Psoas muscle (tissue), 8 donors: ENCODE measurements at regions of chr17 and their contacts with region 1.

Region 1: GRCh38 chr17:63621766-63622519 is at the start of gene MAP3K3:
- DNase-seq: peak; percentile 98 to 99
- ATAC-seq: peak; percentile 95 to 96 (median 96)
- H3K4me3 ChIP-seq: peak within 1 kb of the TSS; percentile 87
- H3K27ac ChIP-seq: peak within 1 kb of the TSS; percentile 90
- H3K4me1 ChIP-seq: peaks cover 36% of the 10 kb centered on the region
- H3K27me3 ChIP-seq: no peaks in the 10 kb centered on the region
- CTCF ChIP-seq: peak; percentile 12
- total RNA-seq, gene MAP3K3: 19.7 to 27.4 (median 24.7) TPM

Region 2: GRCh38 chr17:63714547-63715277 is 92.8 kb after region 1 on chr17:
- intact Hi-C with region 1: no loop called
- DNase-seq: peak in 1 of 2 donors; percentile 66
- ATAC-seq: peak; percentile 93 to 98 (median 97)
- H3K4me3 ChIP-seq: no peak overlapping the region
- H3K27ac ChIP-seq: peak overlapping the region; percentile 30
- H3K4me1 ChIP-seq: no peaks in the 10 kb centered on the region
- H3K27me3 ChIP-seq: no peaks in the 10 kb centered on the region
- CTCF ChIP-seq: no peak

Region 3: GRCh38 chr17:63741221-63742049 is 119.5 kb after region 1 on chr17 and contains the start of gene STRADA:
- intact Hi-C with region 1: loop called in 1 of 2 experiments (anchors 5 kb)
- DNase-seq: peak; percentile 99
- ATAC-seq: peak; percentile 97 to 98 (median 98)
- H3K4me3 ChIP-seq: peak within 1 kb of the TSS; percentile 99
- H3K27ac ChIP-seq: peak within 1 kb of the TSS; percentile 88
- H3K4me1 ChIP-seq: peaks cover 7% of the 10 kb centered on the region
- H3K27me3 ChIP-seq: no peaks in the 10 kb centered on the region
- CTCF ChIP-seq: no peak
- total RNA-seq, gene STRADA: 6.7 to 14.9 (median 8.3) TPM